MCF 10A (cell line): ENCODE measurements at regions of chr2 and their contacts with region 1.

Region 1: DNA sequence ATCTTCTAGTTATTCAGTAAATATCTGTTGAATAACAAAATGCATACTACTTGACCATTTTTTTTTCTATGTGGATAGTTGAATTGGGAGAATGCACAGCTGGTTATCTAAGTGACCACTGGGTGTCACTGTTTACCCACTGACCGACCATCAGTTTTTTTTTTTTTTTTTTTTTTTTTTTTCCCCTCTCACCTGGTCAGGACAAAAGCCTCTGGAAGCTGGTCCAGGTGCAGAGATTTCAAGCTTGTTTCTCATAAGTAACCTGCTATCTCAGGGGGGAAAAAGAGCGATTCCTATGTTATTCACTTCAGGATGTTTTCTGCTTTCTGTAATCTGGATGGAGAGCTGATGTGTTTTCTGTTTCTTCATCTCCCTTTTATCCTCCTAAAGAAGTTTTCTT is 256.0 kb downstream of the DCDC2C start:
- DNase-seq: peak; percentile 46
- H3K4me3 Mint-ChIP-seq: no peak overlapping the region
- H3K27ac Mint-ChIP-seq: no peak overlapping the region
- H3K4me1 Mint-ChIP-seq: peaks cover 10% of the 10 kb centered on the region
- H3K27me3 Mint-ChIP-seq: no peaks in the 10 kb centered on the region
- CTCF ChIP-seq: peak; percentile 55

Region 2: GRCh38 chr2:4053769-4054493 is 94.6 kb after region 1 on chr2:
- CTCF ChIA-PET with region 1: interaction called, 3 read pairs
- POLR2A ChIA-PET with region 1: no interaction called
- intact Hi-C with region 1: loop called (anchors 2 kb)
- DNase-seq: peak; percentile 3
- H3K4me3 Mint-ChIP-seq: no peak overlapping the region
- H3K27ac Mint-ChIP-seq: no peak overlapping the region
- H3K4me1 Mint-ChIP-seq: peaks cover 7% of the 10 kb centered on the region
- H3K27me3 Mint-ChIP-seq: no peaks in the 10 kb centered on the region
- CTCF ChIP-seq: peak; percentile 32

Region 3: DNA sequence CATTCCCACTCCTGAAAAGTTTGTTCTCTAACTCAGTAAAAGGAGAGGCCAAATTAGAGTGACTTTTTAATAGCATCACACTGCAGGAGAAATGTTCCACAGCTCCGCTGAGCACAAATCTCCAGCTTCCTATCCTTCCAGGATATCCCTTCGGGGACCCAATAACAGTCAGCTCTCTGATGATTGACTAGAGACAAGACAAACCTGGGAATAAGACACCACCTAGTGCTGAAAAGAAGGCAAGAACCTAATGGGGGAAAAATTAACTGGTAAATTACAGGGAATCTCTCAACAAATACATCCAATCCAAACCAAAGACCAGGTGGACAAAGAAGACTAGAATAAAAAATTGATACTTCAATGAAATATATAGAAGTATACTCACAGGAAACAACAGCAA is 755.7 kb after region 1 on chr2:
- CTCF ChIA-PET with region 1: interaction called, 12 read pairs
- POLR2A ChIA-PET with region 1: interaction called, 3 read pairs
- intact Hi-C with region 1: loop called (anchors 1 kb)
- DNase-seq: peak; percentile 35
- H3K4me3 Mint-ChIP-seq: no peak overlapping the region
- H3K27ac Mint-ChIP-seq: no peak overlapping the region
- H3K4me1 Mint-ChIP-seq: peaks cover 4% of the 10 kb centered on the region
- H3K27me3 Mint-ChIP-seq: no peaks in the 10 kb centered on the region
- CTCF ChIP-seq: peak; percentile 33

Region 4: DNA sequence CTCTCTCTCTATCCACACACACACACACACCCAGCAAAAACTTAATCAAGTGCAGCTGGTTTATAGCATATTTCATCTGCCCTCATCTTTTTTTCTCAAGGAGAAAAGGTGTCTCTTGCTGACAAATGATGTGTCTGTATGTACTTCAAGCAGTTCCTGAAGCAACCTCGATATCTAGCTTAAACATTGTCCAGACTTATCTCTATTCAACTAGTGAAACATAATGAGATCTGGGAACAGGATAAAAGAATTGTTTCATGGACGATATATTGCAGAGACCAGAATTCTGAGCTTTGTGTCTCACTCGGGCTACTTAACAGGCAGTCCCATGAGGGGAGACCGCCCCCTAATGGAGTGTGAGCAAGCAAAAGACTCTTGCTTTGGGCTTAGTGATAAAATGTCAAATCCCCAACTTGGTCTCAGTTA is 803.6 kb after region 1 on chr2:
- CTCF ChIA-PET with region 1: interaction called, 30 read pairs
- POLR2A ChIA-PET with region 1: no interaction called
- intact Hi-C with region 1: loop called (anchors 1 kb)
- DNase-seq: peak; percentile 50
- H3K4me3 Mint-ChIP-seq: no peak overlapping the region
- H3K27ac Mint-ChIP-seq: peak overlapping the region; percentile 63
- H3K4me1 Mint-ChIP-seq: peaks cover 8% of the 10 kb centered on the region
- H3K27me3 Mint-ChIP-seq: no peaks in the 10 kb centered on the region
- CTCF ChIP-seq: peak; percentile 64